Panc1 (cell line): ENCODE measurements at regions of chr5 and their contacts with region 1.

Region 1: GRCh38 chr5:67209142-67209771 is 12.7 kb upstream of the CD180 start:
- DNase-seq: peak; percentile 84
- ATAC-seq: peak; percentile 83
- H3K4me3 ChIP-seq: no peak overlapping the region
- H3K27ac ChIP-seq: no peak overlapping the region
- H3K4me1 ChIP-seq: no peaks in the 10 kb centered on the region
- H3K27me3 ChIP-seq: no peaks in the 10 kb centered on the region
- CTCF ChIP-seq: peak; percentile 85

Region 2: GRCh38 chr5:66306105-66306843 is 903.0 kb before region 1 on chr5:
- CTCF ChIA-PET with region 1: no interaction called
- POLR2A ChIA-PET with region 1: no interaction called
- in situ Hi-C with region 1: no loop called
- intact Hi-C with region 1: loop called (anchors 5 kb)
- DNase-seq: peak; percentile 54
- ATAC-seq: peak; percentile 85
- H3K4me3 ChIP-seq: no peak overlapping the region
- H3K27ac ChIP-seq: no peak overlapping the region
- H3K4me1 ChIP-seq: no peaks in the 10 kb centered on the region
- H3K27me3 ChIP-seq: no peaks in the 10 kb centered on the region; the same call in none of the 2 replicates
- CTCF ChIP-seq: peak; percentile 91

Region 3: DNA sequence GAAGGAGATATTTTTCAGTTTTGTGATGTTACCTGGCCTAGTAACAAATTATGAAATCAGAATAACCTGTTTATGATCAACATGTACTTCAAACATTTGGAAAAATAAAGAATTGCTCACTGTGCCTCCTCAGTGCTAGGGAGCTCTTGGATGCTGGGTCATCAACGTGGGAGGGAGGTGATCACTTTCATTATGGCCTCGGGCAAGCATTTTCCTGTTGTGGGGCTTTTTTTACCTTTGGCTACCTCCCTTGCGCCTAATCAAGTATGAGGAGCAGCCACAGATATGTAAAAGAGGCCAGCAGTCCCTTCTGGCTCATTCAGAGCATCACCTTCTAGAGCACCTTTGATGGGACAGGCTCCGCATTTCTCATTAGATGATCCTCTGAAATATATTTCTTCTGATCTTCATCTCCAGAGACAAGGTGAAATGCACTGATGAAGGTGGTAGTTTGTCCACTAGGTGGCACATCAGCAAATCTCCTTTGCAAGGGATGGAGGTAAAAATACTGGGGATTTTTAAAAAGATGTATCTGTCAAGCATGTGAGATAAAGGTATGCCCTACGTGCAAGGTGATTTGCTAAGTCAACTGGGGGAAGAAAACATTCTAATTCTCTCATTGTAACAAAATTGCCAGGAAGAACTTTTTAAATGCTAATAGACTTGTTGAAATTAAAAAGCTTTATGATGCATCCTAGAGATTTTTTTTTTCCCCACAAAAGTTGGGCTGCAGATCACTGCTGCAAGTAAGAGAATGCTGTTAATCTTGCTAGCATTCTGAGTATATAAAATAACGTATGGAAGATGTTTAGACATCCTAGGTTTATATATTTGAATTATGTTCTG is 394.9 kb before region 1 on chr5:
- CTCF ChIA-PET with region 1: no interaction called
- POLR2A ChIA-PET with region 1: no interaction called
- in situ Hi-C with region 1: no loop called
- intact Hi-C with region 1: loop called (anchors 10 kb)
- DNase-seq: peak; percentile 46
- ATAC-seq: peak; percentile 80; the same call in 1 of the 2 replicates
- H3K4me3 ChIP-seq: no peak overlapping the region; a peak in 1 of 4 replicates
- H3K27ac ChIP-seq: no peak overlapping the region
- H3K4me1 ChIP-seq: no peaks in the 10 kb centered on the region
- H3K27me3 ChIP-seq: peaks cover 2% of the 10 kb centered on the region; the same call in 1 of the 2 replicates
- CTCF ChIP-seq: peak; percentile 78

Region 4: DNA sequence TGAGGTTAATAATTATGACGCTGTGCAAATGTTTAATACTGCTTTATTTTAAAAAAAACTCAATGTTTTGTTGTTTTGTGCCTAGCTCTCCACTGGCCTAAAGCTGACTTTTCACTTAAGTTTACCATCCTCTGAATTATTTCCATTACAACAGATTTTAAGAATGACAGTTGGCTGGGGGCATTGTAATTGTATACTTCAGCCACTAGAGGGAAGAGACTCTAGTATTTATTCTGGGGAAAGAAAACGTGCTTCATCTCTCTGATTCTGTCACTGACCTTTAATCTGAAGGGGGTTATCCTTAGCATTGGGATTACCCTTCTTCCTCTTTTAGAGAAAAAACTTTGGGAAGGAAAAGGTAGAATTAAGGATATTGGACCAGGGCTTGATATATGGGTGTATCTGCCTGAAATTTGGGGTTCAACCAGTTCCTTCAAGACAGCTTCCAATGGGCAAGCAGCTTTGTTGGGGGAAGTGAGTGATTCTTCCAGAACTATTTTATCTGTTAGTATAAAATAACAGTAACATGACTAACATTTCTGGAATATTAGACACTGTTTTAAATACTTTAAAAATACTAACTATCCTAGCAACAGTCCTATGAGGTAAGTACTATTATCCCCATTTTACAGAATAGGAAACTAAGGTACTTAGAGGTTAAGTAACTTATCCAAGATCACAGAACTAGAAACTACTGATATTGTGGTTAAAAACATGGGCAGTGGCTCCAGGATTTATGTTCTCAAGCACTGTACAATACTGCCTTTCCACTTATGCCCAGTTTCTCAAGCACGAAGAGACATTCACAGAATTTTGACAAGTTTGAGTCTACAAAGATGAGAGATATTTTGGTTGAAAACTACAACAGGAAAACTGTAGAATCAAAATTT is 221.1 kb before region 1 on chr5:
- CTCF ChIA-PET with region 1: no interaction called
- POLR2A ChIA-PET with region 1: no interaction called
- in situ Hi-C with region 1: no loop called
- intact Hi-C with region 1: loop called (anchors 5 kb)
- DNase-seq: no peak
- ATAC-seq: 0 out of 2 replicates have a peak, but pooled peaks have one; percentile 62
- H3K4me3 ChIP-seq: no peak overlapping the region
- H3K27ac ChIP-seq: no peak overlapping the region
- H3K4me1 ChIP-seq: no peaks in the 10 kb centered on the region
- H3K27me3 ChIP-seq: no peaks in the 10 kb centered on the region
- CTCF ChIP-seq: peak; percentile 78; the same call in 1 of the 2 replicates

Region 5: DNA sequence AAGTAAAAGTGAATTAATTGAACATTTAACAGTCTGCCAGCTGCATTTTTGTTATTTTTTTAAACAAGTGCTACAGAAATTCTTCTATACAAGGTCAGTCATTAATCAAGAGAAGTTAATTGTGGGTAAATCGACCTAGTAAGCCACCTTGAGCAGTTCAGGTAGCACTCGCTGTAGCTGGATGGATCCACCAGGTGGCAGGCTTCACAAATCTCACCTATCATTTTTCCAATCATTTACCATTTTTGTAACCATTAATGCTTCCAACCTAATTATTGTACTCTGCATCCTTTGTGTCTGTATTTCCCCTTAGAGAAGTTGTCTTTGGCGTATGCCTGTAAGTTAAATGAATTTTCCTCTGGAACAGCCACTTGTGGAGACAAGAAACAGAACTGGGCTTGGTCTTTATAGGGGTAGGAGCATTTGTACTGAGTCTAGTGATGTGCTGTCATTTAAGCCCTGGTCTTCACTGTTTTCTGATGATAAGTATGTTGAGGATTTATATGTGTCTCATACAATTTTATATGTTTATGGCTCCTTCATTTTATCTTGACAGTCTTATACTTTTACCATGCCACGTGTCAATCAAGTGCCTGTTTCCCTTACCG is 52.2 kb before region 1 on chr5:
- CTCF ChIA-PET with region 1: no interaction called
- POLR2A ChIA-PET with region 1: no interaction called
- in situ Hi-C with region 1: no loop called
- intact Hi-C with region 1: loop called (anchors 2 kb)
- DNase-seq: peak; percentile 45
- ATAC-seq: peak; percentile 78
- H3K4me3 ChIP-seq: no peak overlapping the region
- H3K27ac ChIP-seq: no peak overlapping the region
- H3K4me1 ChIP-seq: no peaks in the 10 kb centered on the region
- H3K27me3 ChIP-seq: peaks cover 13% of the 10 kb centered on the region
- CTCF ChIP-seq: peak; percentile 86

Region 6: DNA sequence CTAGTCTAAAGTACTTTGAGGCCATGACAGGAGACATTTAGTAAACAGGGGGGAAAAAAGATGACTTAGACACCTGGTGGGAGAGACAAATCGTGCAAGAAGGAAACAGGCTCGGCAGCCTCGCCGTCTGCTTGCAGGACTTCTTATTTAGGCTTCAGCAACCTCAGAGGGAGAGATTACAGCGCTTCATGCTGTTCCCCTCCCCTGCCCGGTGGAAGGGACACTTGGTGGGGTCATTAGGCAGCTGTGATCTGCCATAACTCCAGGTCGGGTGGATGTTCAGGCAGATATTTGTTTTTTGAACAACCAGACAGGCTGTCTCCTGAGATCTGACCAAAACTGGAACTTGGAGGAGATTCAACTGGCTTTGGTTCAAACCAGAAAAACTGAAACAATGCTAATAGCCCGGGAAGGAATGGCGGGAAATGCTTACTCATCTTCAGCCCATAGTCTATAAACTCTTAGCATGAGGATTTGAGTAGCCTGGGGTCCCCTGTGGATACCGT is 25.5 kb after region 1 on chr5:
- CTCF ChIA-PET with region 1: no interaction called
- POLR2A ChIA-PET with region 1: no interaction called
- in situ Hi-C with region 1: no loop called
- intact Hi-C with region 1: no loop called
- DNase-seq: no peak
- ATAC-seq: no peak
- H3K4me3 ChIP-seq: no peak overlapping the region
- H3K27ac ChIP-seq: no peak overlapping the region
- H3K4me1 ChIP-seq: no peaks in the 10 kb centered on the region
- H3K27me3 ChIP-seq: peaks cover 3% of the 10 kb centered on the region; the same call in 1 of the 2 replicates
- CTCF ChIP-seq: no peak